GM23248 (cell line): ENCODE measurements at regions of chr5 and their contacts with region 1.

Region 1: GRCh38 chr5:178163772-178164735 is 10.4 kb upstream of the NHP2 start:
- DNase-seq: peak; percentile 79
- H3K4me3 ChIP-seq: peak overlapping the region; percentile 37; the same call in 1 of the 2 replicates
- H3K27ac ChIP-seq: no peak overlapping the region
- H3K4me1 ChIP-seq: no peaks in the 10 kb centered on the region
- H3K27me3 ChIP-seq: peaks cover 8% of the 10 kb centered on the region; the same call in 1 of the 2 replicates

Region 2: DNA sequence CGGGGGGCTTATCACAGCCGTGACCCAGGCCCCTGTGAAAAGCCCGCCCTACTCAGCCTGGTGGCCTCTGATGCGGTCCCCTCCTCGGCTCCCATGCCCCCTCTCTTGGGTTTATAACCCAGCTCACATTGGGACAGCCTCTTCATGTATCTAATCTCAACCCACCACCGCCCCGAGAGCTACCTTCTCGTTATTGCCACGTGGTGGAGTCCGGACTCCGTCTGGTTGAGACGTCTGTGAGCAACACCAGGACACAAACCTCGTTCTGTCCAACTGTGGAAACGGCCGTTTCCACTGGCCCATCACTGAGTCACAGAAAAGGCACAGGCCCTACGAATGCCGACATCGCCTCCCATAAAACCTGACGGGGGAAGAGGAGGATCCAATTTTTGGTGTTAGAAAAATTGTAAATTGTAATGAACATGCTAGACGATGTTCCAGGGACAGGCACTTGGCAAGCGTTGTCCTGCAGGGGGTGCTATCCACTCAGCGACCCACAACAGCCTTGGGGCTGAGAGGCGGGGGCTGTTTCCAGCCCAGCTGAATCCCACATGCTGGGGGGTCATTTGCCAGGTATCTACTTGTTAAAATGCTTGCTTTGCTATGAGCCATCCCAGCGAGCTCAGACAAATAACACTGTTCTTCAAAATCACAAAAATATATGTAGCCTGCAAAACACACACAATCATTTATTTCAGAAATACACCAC is 88.1 kb before region 1 on chr5:
- in situ Hi-C with region 1: loop called (anchors 5 kb)
- DNase-seq: peak; percentile 78
- H3K4me3 ChIP-seq: peak overlapping the region; percentile 37
- H3K27ac ChIP-seq: no peak overlapping the region
- H3K4me1 ChIP-seq: peaks cover 7% of the 10 kb centered on the region; the same call in 1 of the 2 replicates
- H3K27me3 ChIP-seq: peaks cover 13% of the 10 kb centered on the region; the same call in 1 of the 2 replicates

Region 3: GRCh38 chr5:178288381-178289368 is 124.6 kb after region 1 on chr5:
- in situ Hi-C with region 1: no loop called
- DNase-seq: peak; percentile 21
- H3K4me3 ChIP-seq: no peak overlapping the region
- H3K27ac ChIP-seq: no peak overlapping the region
- H3K4me1 ChIP-seq: no peaks in the 10 kb centered on the region
- H3K27me3 ChIP-seq: peaks cover 18% of the 10 kb centered on the region